Activated B cell treated with CpG ODN at 0.5 μM for 24 hours (primary cell): ENCODE measurements at regions of chr2 and their contacts with region 1.

Region 1: GRCh38 chr2:181466661-181467576 is 9.7 kb downstream of the ITGA4 start:
- DNase-seq: peak; percentile 53
- ATAC-seq: peak; percentile 45
- H3K4me3 Mint-ChIP-seq: no peak overlapping the region
- H3K27ac Mint-ChIP-seq: peak overlapping the region; percentile 26
- H3K4me1 Mint-ChIP-seq: peaks cover 88% of the 10 kb centered on the region
- H3K27me3 Mint-ChIP-seq: no peaks in the 10 kb centered on the region
- CTCF ChIP-seq: peak; percentile 82

Region 2: GRCh38 chr2:180876506-180876905 is 590.4 kb before region 1 on chr2:
- CTCF ChIA-PET with region 1: no interaction called
- POLR2A ChIA-PET with region 1: no interaction called
- intact Hi-C with region 1: no loop called
- DNase-seq: no peak
- ATAC-seq: no peak
- H3K4me3 Mint-ChIP-seq: no peak overlapping the region
- H3K27ac Mint-ChIP-seq: no peak overlapping the region
- H3K4me1 Mint-ChIP-seq: no peaks in the 10 kb centered on the region
- H3K27me3 Mint-ChIP-seq: peaks cover 5% of the 10 kb centered on the region
- CTCF ChIP-seq: no peak

Region 3: GRCh38 chr2:181077128-181077709 is 389.7 kb before region 1 on chr2:
- CTCF ChIA-PET with region 1: interaction called, 3 read pairs
- POLR2A ChIA-PET with region 1: no interaction called
- intact Hi-C with region 1: loop called (anchors 1 kb)
- DNase-seq: no peak
- ATAC-seq: peak; percentile 58
- H3K4me3 Mint-ChIP-seq: no peak overlapping the region
- H3K27ac Mint-ChIP-seq: no peak overlapping the region
- H3K4me1 Mint-ChIP-seq: no peaks in the 10 kb centered on the region
- H3K27me3 Mint-ChIP-seq: no peaks in the 10 kb centered on the region
- CTCF ChIP-seq: no peak

Region 4: GRCh38 chr2:181104512-181105115 is 362.3 kb before region 1 on chr2:
- CTCF ChIA-PET with region 1: interaction called, 54 read pairs
- POLR2A ChIA-PET with region 1: no interaction called
- intact Hi-C with region 1: loop called (anchors 1 kb)
- DNase-seq: no peak
- ATAC-seq: no peak
- H3K4me3 Mint-ChIP-seq: no peak overlapping the region
- H3K27ac Mint-ChIP-seq: no peak overlapping the region
- H3K4me1 Mint-ChIP-seq: peaks cover 8% of the 10 kb centered on the region
- H3K27me3 Mint-ChIP-seq: no peaks in the 10 kb centered on the region
- CTCF ChIP-seq: no peak

Region 5: DNA sequence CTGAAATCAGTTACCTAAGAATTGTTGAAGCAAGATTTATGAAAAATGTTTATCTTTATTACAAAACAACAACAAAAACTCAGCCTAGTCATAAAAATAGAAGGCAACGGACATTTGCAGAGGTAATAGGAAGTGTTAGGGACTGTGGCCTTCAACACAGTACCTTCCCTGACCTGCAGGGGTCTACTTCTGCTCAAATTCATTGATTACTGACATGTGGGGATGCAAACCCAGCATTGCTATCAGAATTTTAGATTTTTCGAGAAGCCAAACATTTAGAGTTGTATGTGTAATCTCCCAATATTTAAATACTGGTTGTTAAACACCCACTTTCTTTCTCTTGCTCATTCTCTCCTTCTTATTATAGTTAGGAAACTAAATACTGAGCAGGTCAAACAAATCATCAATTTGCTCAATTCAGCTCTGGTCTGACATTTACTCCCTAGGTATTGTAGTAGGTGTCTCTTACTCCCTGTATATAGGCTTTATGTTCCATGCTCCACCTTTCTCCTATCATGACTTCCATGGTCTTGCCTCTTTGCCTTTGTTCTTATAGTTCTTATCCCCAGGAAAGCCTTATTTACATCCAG is 288.0 kb before region 1 on chr2:
- CTCF ChIA-PET with region 1: interaction called, 11 read pairs
- POLR2A ChIA-PET with region 1: interaction called, 4 read pairs
- intact Hi-C with region 1: no loop called
- DNase-seq: no peak
- ATAC-seq: peak; percentile 82
- H3K4me3 Mint-ChIP-seq: no peak overlapping the region
- H3K27ac Mint-ChIP-seq: no peak overlapping the region
- H3K4me1 Mint-ChIP-seq: peaks cover 7% of the 10 kb centered on the region
- H3K27me3 Mint-ChIP-seq: no peaks in the 10 kb centered on the region
- CTCF ChIP-seq: peak; percentile 42

Region 6: DNA sequence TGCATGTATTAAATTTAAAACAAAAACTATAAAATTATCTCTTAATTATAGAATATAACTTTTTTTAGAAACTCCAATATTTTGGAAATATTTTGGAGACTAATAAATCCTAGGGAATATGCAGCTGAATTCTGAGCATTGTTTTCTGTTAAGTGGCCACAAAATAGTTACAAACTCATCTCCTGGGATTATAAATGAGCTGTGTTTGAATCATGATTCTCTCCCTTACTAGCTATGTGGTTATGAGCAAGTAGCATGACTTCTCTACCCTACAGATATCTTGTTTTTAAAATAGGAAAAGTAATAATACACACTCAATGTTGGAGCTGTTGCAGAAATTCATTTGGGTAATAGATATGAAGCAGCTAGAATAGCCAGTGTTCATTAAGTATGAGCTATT is 147.6 kb before region 1 on chr2:
- CTCF ChIA-PET with region 1: interaction called, 11 read pairs
- POLR2A ChIA-PET with region 1: no interaction called
- intact Hi-C with region 1: no loop called
- DNase-seq: no peak
- ATAC-seq: no peak
- H3K4me3 Mint-ChIP-seq: no peak overlapping the region
- H3K27ac Mint-ChIP-seq: no peak overlapping the region
- H3K4me1 Mint-ChIP-seq: peaks cover 16% of the 10 kb centered on the region
- H3K27me3 Mint-ChIP-seq: no peaks in the 10 kb centered on the region
- CTCF ChIP-seq: no peak